Heart left ventricle (tissue), 16 donors: ENCODE measurements at regions of chr12 and their contacts with region 1.

Region 1: DNA sequence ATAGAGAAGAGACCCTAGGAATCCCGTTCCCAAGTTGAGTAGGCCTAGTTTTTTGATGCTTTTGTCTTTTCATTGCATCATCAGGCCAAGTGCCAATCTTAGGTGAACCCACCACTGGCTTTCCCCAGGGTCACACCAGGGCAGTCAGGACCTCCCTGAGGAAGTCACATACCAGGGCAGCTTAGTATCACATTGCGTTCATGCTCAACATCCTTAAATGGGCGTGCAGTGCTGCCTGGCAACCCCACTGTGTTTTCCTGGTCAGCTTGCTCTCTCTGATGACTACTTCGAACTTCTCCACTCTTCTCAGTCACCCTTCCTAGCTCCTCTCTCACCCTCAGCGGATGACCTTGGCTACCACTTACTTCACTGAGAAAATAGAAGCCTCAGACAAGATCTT is 9.0 kb downstream of the ASIC1 start:
- DNase-seq: peak in 2 of 5 donors; percentile 35 to 42
- ATAC-seq: peak in 3 of 4 donors; percentile 43 to 61 (median 58)
- H3K4me3 ChIP-seq: no peak overlapping the region
- H3K27ac ChIP-seq: peak overlapping the region in 1 of 12 donors; percentile 34
- H3K4me1 ChIP-seq: peaks cover 0 to 13% (median 2%) of the 10 kb centered on the region in 12 donors
- H3K27me3 ChIP-seq: no peaks in the 10 kb centered on the region
- CTCF ChIP-seq: no peak
- POLR2A ChIP-seq: no peak

Region 2: GRCh38 chr12:49763006-49763591 is 303.3 kb before region 1 on chr12:
- intact Hi-C with region 1: loop called in 1 of 10 experiments (anchors 10 kb)
- DNase-seq: peak; percentile 72 to 86 (median 80)
- ATAC-seq: peak; percentile 60 to 82 (median 70)
- H3K4me3 ChIP-seq: no peak overlapping the region
- H3K27ac ChIP-seq: peak overlapping the region in 11 of 12 donors; percentile 2 to 74 (median 41)
- H3K4me1 ChIP-seq: peaks cover 0 to 27% (median 8%) of the 10 kb centered on the region in 12 donors
- H3K27me3 ChIP-seq: no peaks in the 10 kb centered on the region
- CTCF ChIP-seq: peak; percentile 67 to 88 (median 73)
- POLR2A ChIP-seq: no peak

Region 3: DNA sequence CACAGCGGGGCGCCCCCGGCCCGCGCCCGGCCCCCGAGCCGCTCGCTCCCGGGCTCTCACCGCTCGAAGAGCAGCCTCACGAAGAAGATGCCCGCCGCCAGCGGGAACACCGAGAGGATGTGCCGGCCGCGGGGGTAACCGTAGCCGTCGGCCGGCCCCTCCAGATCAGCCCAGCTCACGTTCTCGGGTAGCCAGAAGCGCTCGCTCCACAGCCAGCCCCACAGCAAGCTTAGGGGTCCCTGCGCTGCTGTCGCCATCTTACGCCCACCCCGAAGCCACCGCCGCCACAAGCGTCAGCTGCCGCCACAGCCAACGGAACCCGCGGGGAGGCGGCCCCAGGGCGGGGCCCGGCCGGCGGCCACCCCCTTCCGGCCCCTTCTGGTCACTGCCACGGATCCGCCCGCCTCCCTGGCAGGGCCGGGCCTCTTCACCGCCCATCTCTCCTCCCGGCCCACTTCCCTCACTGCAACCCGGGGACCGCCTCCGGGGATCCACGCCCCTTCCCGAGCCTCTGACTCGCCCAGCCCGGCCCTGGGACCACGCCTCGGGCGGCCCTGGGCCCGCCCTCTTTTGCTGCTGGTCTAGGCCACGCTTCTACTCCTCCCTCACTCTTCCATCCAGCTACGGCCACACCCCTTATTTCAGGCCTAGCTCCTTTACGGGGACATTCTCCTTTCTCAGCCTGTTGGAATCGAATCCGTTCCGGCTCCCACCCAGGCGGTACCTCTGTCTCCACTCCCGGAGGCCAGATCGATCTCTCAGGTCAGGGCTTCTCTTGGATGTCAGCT is 100.8 kb after region 1 on chr12 and contains the start of gene CERS5:
- intact Hi-C with region 1: no loop called
- DNase-seq: peak; percentile 99
- ATAC-seq: peak; percentile 99 to 100 (median 100)
- H3K4me3 ChIP-seq: peak within 1 kb of the TSS; percentile 61 to 100 (median 92)
- H3K27ac ChIP-seq: peak within 1 kb of the TSS; percentile 55 to 97 (median 92)
- H3K4me1 ChIP-seq: peaks cover 0 to 18% (median 10%) of the 10 kb centered on the region in 12 donors
- H3K27me3 ChIP-seq: no peaks in the 10 kb centered on the region
- CTCF ChIP-seq: peak in 9 of 12 donors; percentile 17 to 55 (median 35)
- POLR2A ChIP-seq: peak in 1 of 2 donors; percentile 62
- total RNA-seq, gene CERS5: 6.8 to 28.4 (median 9.3) TPM

Region 4: DNA sequence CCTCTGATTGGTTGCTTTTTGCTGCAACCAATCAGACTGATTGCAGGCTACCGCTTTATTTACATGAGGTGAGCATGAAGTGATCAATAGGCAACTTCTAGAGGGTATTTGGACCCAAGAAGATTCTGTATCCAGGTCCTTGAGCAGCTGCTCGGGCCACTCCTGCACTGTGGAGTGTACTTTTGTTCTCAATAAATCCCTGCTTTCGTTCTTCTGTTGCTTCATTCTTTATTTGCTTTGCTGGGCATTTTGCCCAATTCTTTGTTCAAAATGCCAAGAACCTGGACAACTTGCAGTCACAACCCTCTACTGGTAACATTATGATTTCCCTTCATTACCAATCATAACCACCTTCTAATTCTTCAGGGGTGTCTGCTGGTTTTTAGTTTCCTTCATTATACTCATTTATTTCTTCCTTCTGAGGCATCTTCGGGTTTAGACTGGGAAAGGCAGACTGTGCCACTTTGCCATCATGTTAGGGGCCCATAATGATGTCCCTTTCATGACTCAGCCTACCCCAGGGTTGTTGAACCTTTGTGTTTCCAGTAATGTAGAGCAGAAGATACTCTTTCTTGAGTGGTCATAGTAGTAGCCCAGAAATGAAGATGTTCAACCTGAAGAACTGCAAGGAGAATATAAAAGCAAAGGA is 260.3 kb after region 1 on chr12:
- intact Hi-C with region 1: no loop called
- DNase-seq: no peak
- ATAC-seq: no peak
- H3K4me3 ChIP-seq: no peak overlapping the region
- H3K27ac ChIP-seq: no peak overlapping the region
- H3K4me1 ChIP-seq: peaks cover 0 to 12% (median 2%) of the 10 kb centered on the region in 12 donors
- H3K27me3 ChIP-seq: no peaks in the 10 kb centered on the region
- CTCF ChIP-seq: no peak
- POLR2A ChIP-seq: no peak